Transverse colon (tissue), 4 donors: ENCODE measurements at regions of chr10 and their contacts with region 1.

Region 1: GRCh38 chr10:18651324-18652007 is at the start of gene NSUN6:
- DNase-seq: peak; percentile 94
- H3K4me3 ChIP-seq: peak within 1 kb of the TSS; percentile 53 to 81 (median 62)
- H3K27ac ChIP-seq: peak within 1 kb of the TSS; percentile 87 to 89 (median 88)
- H3K4me1 ChIP-seq: peaks cover 7 to 28% (median 14%) of the 10 kb centered on the region in 4 donors
- H3K27me3 ChIP-seq: no peaks in the 10 kb centered on the region
- CTCF ChIP-seq: peak in 2 of 5 experiments; percentile 16 to 28
- EP300 ChIP-seq: no peak
- POLR2A ChIP-seq: peak; percentile 77
- total RNA-seq, gene NSUN6: 8.6 to 69.3 (median 15.4) TPM

Region 2: DNA sequence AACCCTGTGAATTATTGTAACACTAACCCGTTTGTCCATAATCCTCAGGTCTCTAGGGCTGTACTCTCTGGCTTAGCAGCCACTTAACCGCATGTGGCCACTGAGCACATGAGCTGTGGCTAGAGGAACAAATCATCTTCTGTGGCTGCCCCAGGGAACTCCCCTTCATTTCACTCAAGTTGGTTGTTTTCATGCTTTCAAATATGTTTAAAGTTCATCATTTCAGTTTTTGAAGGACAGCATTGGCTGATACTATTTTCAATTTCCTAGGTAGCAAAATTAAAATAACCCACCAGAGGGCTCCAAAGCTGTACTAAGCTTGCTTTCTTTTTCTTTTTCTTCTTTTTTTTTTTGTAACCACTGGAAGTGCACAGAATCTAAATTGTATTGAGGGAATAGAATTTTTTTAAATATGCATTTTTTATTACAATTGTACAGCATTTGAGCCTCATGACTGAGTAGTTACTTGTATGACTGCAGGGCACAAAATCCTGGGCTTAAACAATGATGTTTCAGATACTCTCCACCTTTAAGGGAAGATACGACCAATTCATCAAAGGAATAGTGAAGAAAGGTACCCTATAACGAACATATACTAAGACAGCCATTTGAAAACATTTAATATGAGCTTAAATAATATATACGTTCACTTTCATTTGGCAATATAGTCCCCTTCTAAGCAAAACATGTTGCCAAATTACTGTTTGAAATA is 803.7 kb before region 1 on chr10:
- in situ Hi-C with region 1: no loop called
- intact Hi-C with region 1: no loop called
- DNase-seq: no peak
- H3K4me3 ChIP-seq: no peak overlapping the region
- H3K27ac ChIP-seq: no peak overlapping the region
- H3K4me1 ChIP-seq: peaks cover 0 to 3% (median 0%) of the 10 kb centered on the region in 4 donors
- H3K27me3 ChIP-seq: no peaks in the 10 kb centered on the region
- CTCF ChIP-seq: peak; percentile 18 to 38 (median 36)
- EP300 ChIP-seq: no peak
- POLR2A ChIP-seq: no peak

Region 3: DNA sequence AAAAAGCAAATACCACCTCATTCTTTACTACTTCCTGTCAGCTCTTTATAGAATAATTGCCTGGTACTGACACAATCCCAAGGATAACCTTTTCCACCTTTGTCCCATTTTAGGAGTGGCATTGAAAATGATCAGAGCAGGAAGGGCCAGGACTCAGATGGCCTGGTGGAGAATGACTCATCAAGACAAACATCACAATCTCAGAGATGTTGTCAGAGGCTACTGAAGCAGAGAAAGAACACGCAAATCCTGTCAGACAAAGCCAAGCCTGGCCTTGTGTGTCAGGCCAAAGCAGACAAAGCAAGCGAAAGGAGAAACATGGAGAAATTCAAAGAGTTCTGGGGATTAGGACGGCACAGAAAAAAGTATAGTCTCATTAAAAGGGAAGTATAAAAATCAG is 40.9 kb before region 1 on chr10:
- in situ Hi-C with region 1: no loop called
- intact Hi-C with region 1: no loop called
- DNase-seq: peak; percentile 35
- H3K4me3 ChIP-seq: no peak overlapping the region
- H3K27ac ChIP-seq: peak overlapping the region; percentile 53 to 71 (median 68)
- H3K4me1 ChIP-seq: peaks cover 0 to 22% (median 9%) of the 10 kb centered on the region in 4 donors
- H3K27me3 ChIP-seq: no peaks in the 10 kb centered on the region
- CTCF ChIP-seq: no peak
- EP300 ChIP-seq: no peak
- POLR2A ChIP-seq: no peak

Region 4: GRCh38 chr10:18687195-18687594 is 35.7 kb after region 1 on chr10:
- in situ Hi-C with region 1: no loop called
- intact Hi-C with region 1: loop called (anchors 2 kb)
- DNase-seq: no peak
- H3K4me3 ChIP-seq: no peak overlapping the region
- H3K27ac ChIP-seq: no peak overlapping the region
- H3K4me1 ChIP-seq: no peaks in the 10 kb centered on the region
- H3K27me3 ChIP-seq: no peaks in the 10 kb centered on the region
- CTCF ChIP-seq: no peak
- EP300 ChIP-seq: no peak
- POLR2A ChIP-seq: no peak